ENCODE measurements at regions of chr2 and their contacts with region 1.

Region 1: GRCh38 chr2:12931186-12931844 is 214.6 kb downstream of the TRIB2 start:
- DNase-seq: peak; percentile 75
- H3K4me3 ChIP-seq: no peak overlapping the region
- H3K27ac ChIP-seq: peak overlapping the region in 1 of 2 experiments; percentile 86; a peak in 2 of 4 replicates
- H3K4me1 ChIP-seq: peaks cover 26 to 35% of the 10 kb centered on the region in 2 experiments; a peak in 3 of 4 replicates
- H3K27me3 ChIP-seq: no peaks in the 10 kb centered on the region
- CTCF ChIP-seq: peak; percentile 99
- EP300 ChIP-seq: no peak
- RAD21 ChIP-seq: peak; percentile 89

Region 2: GRCh38 chr2:12728221-12728777 is 203.0 kb before region 1 on chr2:
- CTCF ChIA-PET with region 1: interaction called, 37 read pairs
- POLR2A ChIA-PET with region 1: no interaction called
- DNase-seq: no peak
- H3K4me3 ChIP-seq: no peak overlapping the region
- H3K27ac ChIP-seq: no peak overlapping the region
- H3K4me1 ChIP-seq: peaks cover 10 to 16% of the 10 kb centered on the region in 2 experiments; a peak in 3 of 4 replicates
- H3K27me3 ChIP-seq: no peaks in the 10 kb centered on the region
- CTCF ChIP-seq: no peak
- EP300 ChIP-seq: no peak
- RAD21 ChIP-seq: no peak

Region 3: GRCh38 chr2:12910431-12910830 is 20.9 kb before region 1 on chr2:
- CTCF ChIA-PET with region 1: interaction called, 31 read pairs
- POLR2A ChIA-PET with region 1: no interaction called
- DNase-seq: no peak
- H3K4me3 ChIP-seq: no peak overlapping the region
- H3K27ac ChIP-seq: no peak overlapping the region
- H3K4me1 ChIP-seq: no peaks in the 10 kb centered on the region
- H3K27me3 ChIP-seq: no peaks in the 10 kb centered on the region
- CTCF ChIP-seq: no peak
- EP300 ChIP-seq: no peak
- RAD21 ChIP-seq: no peak

Region 4: GRCh38 chr2:12948961-12949353 is 17.6 kb after region 1 on chr2:
- CTCF ChIA-PET with region 1: interaction called, 53 read pairs
- POLR2A ChIA-PET with region 1: interaction called, 8 read pairs
- DNase-seq: no peak
- H3K4me3 ChIP-seq: no peak overlapping the region; a peak in 1 of 4 replicates
- H3K27ac ChIP-seq: peak overlapping the region; percentile 59 to 100
- H3K4me1 ChIP-seq: peaks cover 32 to 37% of the 10 kb centered on the region in 2 experiments
- H3K27me3 ChIP-seq: no peaks in the 10 kb centered on the region
- CTCF ChIP-seq: no peak
- EP300 ChIP-seq: no peak
- RAD21 ChIP-seq: no peak

Region 5: DNA sequence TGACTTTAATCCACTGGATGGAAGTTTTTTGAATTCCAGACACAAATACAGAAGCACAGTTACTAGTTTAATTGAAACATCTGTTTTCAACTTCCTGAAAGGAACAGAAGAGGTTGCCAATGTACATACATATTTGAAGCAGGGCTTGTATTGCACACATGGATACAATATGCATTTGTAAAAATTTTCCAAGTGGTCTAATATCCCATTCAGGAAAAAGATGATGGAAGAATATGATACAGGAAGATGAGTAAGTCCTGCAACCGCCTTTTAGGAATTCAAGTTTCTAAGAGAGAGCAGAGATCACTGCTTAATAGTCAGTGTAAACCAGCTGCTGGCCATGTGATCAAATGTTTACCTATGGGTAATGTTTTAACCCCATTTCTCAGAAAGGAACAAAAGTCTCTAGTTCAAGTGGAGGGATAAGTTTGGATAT is 50.9 kb after region 1 on chr2:
- CTCF ChIA-PET with region 1: interaction called, 15 read pairs
- POLR2A ChIA-PET with region 1: no interaction called
- DNase-seq: peak; percentile 47
- H3K4me3 ChIP-seq: no peak overlapping the region
- H3K27ac ChIP-seq: peak overlapping the region; percentile 12 to 93; a peak in 3 of 4 replicates
- H3K4me1 ChIP-seq: peaks cover 17 to 44% of the 10 kb centered on the region in 2 experiments; a peak in 3 of 4 replicates
- H3K27me3 ChIP-seq: no peaks in the 10 kb centered on the region
- CTCF ChIP-seq: no peak
- EP300 ChIP-seq: peak; percentile 67 to 75; a peak in 3 of 4 replicates
- RAD21 ChIP-seq: no peak